ENCODE measurements at regions of chr6 and their contacts with region 1.

Region 1: GRCh38 chr6:153574231-153574630 is 443.1 kb upstream of the RGS17 start:
- DNase-seq: no peak
- ATAC-seq: no peak

Region 2: DNA sequence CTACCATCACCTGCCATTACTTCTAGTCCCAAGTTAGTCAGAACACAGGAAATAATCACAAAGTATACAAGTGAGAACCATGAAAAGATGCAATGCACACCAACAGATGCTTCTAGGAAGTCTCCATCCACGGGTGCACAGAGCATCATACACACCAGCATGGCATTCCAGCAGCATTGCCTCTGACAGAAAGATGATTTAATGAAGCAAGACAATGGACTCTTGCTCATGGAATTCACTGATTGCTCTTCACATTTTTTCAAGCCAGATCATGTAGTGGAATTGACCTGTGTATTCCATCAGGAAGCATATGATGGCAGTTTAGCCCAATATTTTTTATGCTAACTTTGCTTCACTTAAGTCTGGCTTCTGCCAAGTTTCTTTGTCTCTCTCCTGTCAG is 36.8 kb before region 1 on chr6:
- intact Hi-C with region 1: no loop called
- DNase-seq: no peak
- ATAC-seq: no peak

Region 3: DNA sequence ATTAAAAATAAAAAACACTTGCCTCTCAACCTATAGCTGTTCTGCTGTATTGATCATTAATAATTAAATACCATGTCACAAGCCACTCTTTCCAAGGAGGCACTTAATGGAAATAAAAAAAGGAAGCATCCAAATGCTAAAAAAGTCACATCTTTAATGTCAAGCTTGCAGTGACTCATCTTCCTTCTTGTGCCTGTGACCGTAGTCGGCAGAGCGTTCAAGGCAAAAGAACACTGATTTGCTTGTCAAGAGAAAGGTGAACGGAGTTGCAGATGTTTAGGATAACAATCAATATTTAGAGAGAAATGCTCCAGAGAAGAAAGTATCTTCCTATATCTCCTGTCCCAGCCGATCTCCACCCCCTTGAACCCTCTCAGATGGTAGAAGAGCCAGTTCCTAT is 123.8 kb after region 1 on chr6:
- intact Hi-C with region 1: loop called in 1 of 2 experiments (anchors 10 kb)
- DNase-seq: no peak
- ATAC-seq: no peak